PC-9 (cell line): ENCODE measurements at regions of chr1 and their contacts with region 1.

Region 1: GRCh38 chr1:182507665-182508064 is 57.7 kb downstream of the RGSL1 start:
- DNase-seq: peak in 1 of 2 experiments; percentile 11
- H3K4me3 ChIP-seq: no peak overlapping the region
- H3K27ac ChIP-seq: no peak overlapping the region
- H3K4me1 ChIP-seq: no peaks in the 10 kb centered on the region
- H3K27me3 ChIP-seq: no peaks in the 10 kb centered on the region; the same call in 1 of the 2 replicates
- CTCF ChIP-seq: no peak

Region 2: DNA sequence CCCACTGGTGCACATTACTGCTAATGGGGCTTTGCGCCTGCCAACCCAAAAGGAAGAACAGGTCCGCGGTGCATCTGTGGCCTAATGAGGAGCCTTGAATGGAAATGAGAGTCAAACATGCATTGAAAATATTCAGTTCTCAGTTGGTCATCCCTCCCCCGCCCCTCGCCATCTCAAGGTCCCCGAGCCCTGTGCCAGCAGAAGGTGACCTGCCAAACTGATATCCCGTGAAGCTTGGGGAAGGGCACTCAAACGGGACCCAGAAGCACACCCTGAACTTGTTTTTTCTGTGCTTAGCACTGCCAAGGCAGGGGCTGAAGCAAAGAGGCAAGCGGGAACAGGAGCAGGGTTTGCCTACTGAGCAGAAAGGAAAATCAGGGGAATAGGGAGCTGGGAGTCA is 378.3 kb before region 1 on chr1:
- CTCF ChIA-PET with region 1: interaction called, 13 read pairs
- POLR2A ChIA-PET with region 1: no interaction called
- intact Hi-C with region 1: no loop called
- DNase-seq: no peak
- H3K4me3 ChIP-seq: no peak overlapping the region
- H3K27ac ChIP-seq: no peak overlapping the region
- H3K4me1 ChIP-seq: no peaks in the 10 kb centered on the region
- H3K27me3 ChIP-seq: no peaks in the 10 kb centered on the region
- CTCF ChIP-seq: no peak

Region 3: GRCh38 chr1:182549346-182549745 is 41.7 kb after region 1 on chr1:
- CTCF ChIA-PET with region 1: no interaction called
- POLR2A ChIA-PET with region 1: no interaction called
- intact Hi-C with region 1: no loop called
- DNase-seq: no peak
- H3K4me3 ChIP-seq: no peak overlapping the region
- H3K27ac ChIP-seq: no peak overlapping the region
- H3K4me1 ChIP-seq: no peaks in the 10 kb centered on the region
- H3K27me3 ChIP-seq: no peaks in the 10 kb centered on the region
- CTCF ChIP-seq: no peak